Activated CD4-positive, alpha-beta T cell treated with anti-CD3 and anti-CD28 coated beads, Interleukin-2, amount 10 ng/mL, durations not matched to agents 7 days and 5 days (primary cell): ENCODE measurements at regions of chr3 and their contacts with region 1.

Region 1: GRCh38 chr3:47781685-47782445 is at the start of gene SMARCC1:
- DNase-seq: peak; percentile 98
- H3K4me3 Mint-ChIP-seq: peak within 1 kb of the TSS; percentile 89
- H3K27ac Mint-ChIP-seq: peak within 1 kb of the TSS; percentile 98
- H3K4me1 Mint-ChIP-seq: peaks cover 24% of the 10 kb centered on the region
- H3K27me3 Mint-ChIP-seq: no peaks in the 10 kb centered on the region
- total RNA-seq, gene SMARCC1: 96.4 to 109 TPM

Region 2: DNA sequence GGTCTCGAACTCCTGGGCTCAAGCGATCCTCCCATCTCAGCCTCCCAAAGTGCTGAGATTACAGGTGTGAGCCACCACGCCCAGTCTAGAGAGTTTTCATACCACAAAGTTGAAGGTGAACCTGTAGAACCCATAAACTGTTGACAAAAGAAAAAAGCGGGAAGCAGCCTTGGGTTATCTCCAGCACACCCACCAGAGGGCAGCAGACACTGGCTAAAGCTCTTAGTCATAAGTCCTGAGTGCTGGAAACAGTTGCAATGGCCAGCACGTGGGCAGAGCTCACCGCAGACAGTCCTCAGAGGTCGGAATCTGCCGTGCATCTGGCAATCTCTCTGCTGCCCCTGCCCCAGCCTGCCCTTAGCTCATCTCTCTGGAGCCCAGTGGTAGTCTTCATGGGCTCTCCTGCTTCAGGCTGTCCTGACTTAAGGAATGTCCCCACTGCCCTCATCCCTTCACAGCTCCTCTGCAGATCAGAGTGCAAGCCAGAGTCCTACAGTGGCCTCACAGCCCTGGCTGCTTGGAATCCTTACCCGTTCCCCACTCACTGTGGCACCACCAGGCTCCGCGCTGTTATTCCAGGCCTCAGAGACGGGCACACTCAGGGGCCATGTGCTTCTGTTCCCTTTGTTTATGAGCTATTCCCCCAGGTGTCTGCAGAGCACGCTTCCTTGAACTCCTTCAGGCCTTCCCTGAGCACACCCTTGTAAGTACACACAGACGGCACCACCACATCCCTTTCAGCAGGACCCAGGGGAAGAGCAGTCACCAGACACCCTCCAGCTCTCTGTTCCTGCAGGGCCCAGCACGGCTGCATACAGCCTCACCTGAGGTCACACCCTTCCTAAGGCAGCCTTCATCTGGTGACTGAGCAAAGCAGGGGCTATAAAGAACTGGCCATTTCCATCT is 259.5 kb before region 1 on chr3:
- CTCF ChIA-PET with region 1: interaction called, 43 read pairs
- POLR2A ChIA-PET with region 1: no interaction called
- DNase-seq: peak; percentile 84
- H3K4me3 Mint-ChIP-seq: no peak overlapping the region
- H3K27ac Mint-ChIP-seq: peak overlapping the region; percentile 33
- H3K4me1 Mint-ChIP-seq: peaks cover 11% of the 10 kb centered on the region
- H3K27me3 Mint-ChIP-seq: no peaks in the 10 kb centered on the region

Region 3: GRCh38 chr3:47617086-47618010 is 164.5 kb before region 1 on chr3:
- CTCF ChIA-PET with region 1: no interaction called
- POLR2A ChIA-PET with region 1: interaction called, 13 read pairs
- DNase-seq: no peak
- H3K4me3 Mint-ChIP-seq: no peak overlapping the region
- H3K27ac Mint-ChIP-seq: no peak overlapping the region
- H3K4me1 Mint-ChIP-seq: peaks cover 9% of the 10 kb centered on the region
- H3K27me3 Mint-ChIP-seq: no peaks in the 10 kb centered on the region

Region 4: DNA sequence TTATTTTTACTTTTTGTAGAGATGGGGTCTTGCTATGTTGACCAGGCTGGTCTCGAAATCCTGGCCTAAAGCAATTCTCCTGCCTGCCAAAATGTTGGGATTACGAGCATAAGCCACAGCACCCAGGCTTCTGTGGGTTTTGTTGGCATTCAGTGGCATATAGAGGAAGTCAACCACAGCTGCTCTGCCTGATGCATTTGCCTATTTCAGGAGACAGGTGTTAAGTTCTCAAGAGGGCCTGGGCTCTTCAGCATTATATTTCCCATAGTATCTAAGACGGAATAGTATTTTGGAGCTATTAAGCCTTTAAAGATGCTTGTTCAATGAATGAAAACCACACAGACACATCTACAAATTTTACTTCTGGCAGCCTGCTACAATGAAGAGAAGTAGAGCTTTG is 129.7 kb before region 1 on chr3:
- CTCF ChIA-PET with region 1: no interaction called
- POLR2A ChIA-PET with region 1: no interaction called
- DNase-seq: no peak
- H3K4me3 Mint-ChIP-seq: no peak overlapping the region
- H3K27ac Mint-ChIP-seq: no peak overlapping the region
- H3K4me1 Mint-ChIP-seq: no peaks in the 10 kb centered on the region
- H3K27me3 Mint-ChIP-seq: no peaks in the 10 kb centered on the region